ENCODE measurements at regions of chr1 and their contacts with region 1.

Region 1: GRCh38 chr1:184082541-184083415 is 31.2 kb downstream of the TSEN15 start:
- DNase-seq: no peak
- ATAC-seq: no peak
- H3K4me3 ChIP-seq: no peak overlapping the region
- H3K27ac ChIP-seq: no peak overlapping the region
- H3K4me1 ChIP-seq: no peaks in the 10 kb centered on the region
- H3K27me3 ChIP-seq: no peaks in the 10 kb centered on the region
- CTCF ChIP-seq: no peak
- POLR2A ChIP-seq: no peak

Region 2: DNA sequence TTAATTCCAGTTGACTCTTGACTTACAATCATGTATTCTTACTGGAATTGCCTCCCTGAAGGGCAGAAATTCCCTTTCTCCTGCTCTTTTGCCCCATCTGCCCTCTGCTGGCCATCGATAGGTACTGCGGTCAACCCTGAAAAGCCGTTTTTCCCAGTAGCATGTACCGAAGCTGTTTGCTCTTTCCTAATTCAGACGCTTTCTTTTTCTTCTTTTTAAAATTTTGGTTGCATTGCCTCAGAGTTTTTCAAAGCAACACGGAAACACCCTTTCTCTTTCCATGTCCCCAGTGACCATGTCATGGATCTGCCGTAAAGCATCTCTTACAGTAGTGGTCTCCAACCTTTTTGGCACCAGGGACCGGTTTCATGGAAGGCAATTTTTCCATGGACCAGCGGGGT is 139.9 kb after region 1 on chr1:
- in situ Hi-C with region 1: loop called (anchors 5 to 10 kb)
- intact Hi-C with region 1: no loop called
- DNase-seq: peak; percentile 28 to 34
- ATAC-seq: peak; percentile 49 to 70
- H3K4me3 ChIP-seq: peak overlapping the region; percentile 24 to 41 (median 30)
- H3K27ac ChIP-seq: no peak overlapping the region
- H3K4me1 ChIP-seq: no peaks in the 10 kb centered on the region
- H3K27me3 ChIP-seq: no peaks in the 10 kb centered on the region
- CTCF ChIP-seq: peak; percentile 81 to 95 (median 87)
- POLR2A ChIP-seq: no peak

Region 3: GRCh38 chr1:184242507-184242943 is 159.7 kb after region 1 on chr1:
- in situ Hi-C with region 1: no loop called
- intact Hi-C with region 1: no loop called
- DNase-seq: peak in 1 of 2 donors; percentile 30
- ATAC-seq: peak; percentile 98 to 99
- H3K4me3 ChIP-seq: no peak overlapping the region
- H3K27ac ChIP-seq: peak overlapping the region in 3 of 4 donors; percentile 45 to 67 (median 49)
- H3K4me1 ChIP-seq: peaks cover 4 to 9% of the 10 kb centered on the region in 2 donors
- H3K27me3 ChIP-seq: no peaks in the 10 kb centered on the region
- CTCF ChIP-seq: peak in 4 of 5 experiments; percentile 13 to 54 (median 31)
- POLR2A ChIP-seq: no peak

Region 4: DNA sequence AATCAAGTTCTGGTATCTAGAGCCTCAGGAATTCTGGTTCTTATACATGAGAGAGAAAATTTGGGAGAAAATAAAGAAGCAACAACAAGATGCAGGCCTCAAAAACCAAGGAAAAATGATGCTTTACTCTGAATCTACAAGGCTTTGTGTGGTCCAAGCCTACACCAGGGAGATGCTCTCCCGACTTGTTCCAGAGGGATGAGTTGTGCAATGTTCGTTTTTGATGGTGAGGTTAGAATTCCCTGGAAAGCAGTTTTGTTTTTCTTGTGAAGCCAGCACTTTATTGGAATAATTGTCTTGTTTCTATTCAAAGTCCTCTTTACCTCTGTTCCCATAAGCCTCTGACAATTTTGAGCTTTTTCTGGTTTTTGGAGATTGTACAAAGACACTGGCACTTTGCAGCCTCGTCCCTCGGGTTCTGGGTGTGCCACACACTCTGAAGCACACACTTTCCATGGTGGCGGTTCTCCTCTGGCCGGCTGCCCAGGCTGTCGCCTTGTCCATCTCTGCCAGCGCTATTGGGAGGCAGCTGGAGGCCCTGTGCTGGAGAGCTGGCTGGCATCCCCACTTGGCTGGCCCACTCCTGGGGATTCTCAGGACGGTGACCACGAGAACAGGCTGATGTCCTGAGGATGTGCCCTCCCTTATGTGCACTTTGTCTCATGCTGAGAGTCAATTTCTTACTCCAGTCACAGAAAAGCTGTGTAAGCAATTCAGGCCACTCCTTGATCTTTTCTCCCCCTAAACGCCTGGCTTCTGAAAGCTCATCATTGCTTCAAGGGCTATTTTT is 601.7 kb after region 1 on chr1:
- in situ Hi-C with region 1: loop called (anchors 10 to 25 kb)
- intact Hi-C with region 1: no loop called
- DNase-seq: no peak
- ATAC-seq: peak in 1 of 2 donors; percentile 34
- H3K4me3 ChIP-seq: no peak overlapping the region
- H3K27ac ChIP-seq: no peak overlapping the region
- H3K4me1 ChIP-seq: no peaks in the 10 kb centered on the region
- H3K27me3 ChIP-seq: no peaks in the 10 kb centered on the region
- CTCF ChIP-seq: no peak
- POLR2A ChIP-seq: no peak

Measured in gastrocnemius medialis (tissue), 4 donors.